CD4-positive, alpha-beta T cell (primary cell): ENCODE measurements at regions of chr22 and their contacts with region 1.

Region 1: DNA sequence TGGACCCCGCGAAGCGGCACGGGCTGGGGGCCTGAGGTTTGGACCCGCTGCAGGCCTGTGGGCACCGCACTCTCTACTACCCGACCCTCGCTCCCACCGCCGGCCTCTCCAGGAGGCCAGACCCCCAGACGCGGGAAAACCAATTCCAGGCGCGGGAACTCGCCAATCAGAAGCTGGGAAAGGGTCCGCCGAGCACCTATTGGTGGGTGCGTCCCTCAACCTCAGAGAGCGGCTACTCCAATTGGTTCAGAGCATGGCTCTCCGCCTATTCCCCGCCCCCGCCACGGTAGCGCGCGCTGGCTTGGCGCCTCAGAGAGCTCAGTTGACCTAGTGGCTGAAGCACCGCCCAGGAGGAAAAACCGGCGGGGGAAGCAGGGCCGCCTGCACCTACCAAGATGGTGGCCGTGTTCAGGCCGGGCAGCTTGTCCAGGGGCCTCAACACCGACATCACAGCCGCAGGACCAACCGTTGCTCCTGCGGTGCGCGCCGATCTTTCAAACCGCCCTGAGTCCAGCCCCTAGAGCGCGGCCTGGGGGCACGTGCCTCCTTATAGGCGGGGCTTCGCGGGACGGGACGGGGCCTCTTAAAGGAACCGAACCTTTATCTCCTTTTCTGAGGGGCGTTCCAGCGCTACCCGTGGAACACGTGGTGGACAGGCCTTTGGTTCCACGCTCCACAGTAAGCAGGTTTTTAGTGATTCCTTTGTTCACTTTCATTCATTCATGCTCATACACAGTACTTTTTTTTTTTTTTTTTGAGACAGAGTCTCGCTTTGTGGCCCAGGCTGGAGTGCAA is at the start of gene CENPM:
- DNase-seq: peak; percentile 71 to 91 (median 82)
- ATAC-seq: peak; percentile 94
- H3K4me3 ChIP-seq: peak within 1 kb of the TSS; percentile 95
- H3K4me3 Mint-ChIP-seq: peak within 1 kb of the TSS; percentile 97
- H3K27ac ChIP-seq: no peak within 1 kb of the TSS
- H3K27ac Mint-ChIP-seq: peak within 1 kb of the TSS; percentile 62
- H3K4me1 ChIP-seq: peaks cover 25% of the 10 kb centered on the region
- H3K4me1 Mint-ChIP-seq: peaks cover 15% of the 10 kb centered on the region
- H3K27me3 ChIP-seq: no peaks in the 10 kb centered on the region
- H3K27me3 Mint-ChIP-seq: no peaks in the 10 kb centered on the region
- CTCF ChIP-seq: no peak
- total RNA-seq, gene CENPM: 7.6 to 8.4 TPM

Region 2: DNA sequence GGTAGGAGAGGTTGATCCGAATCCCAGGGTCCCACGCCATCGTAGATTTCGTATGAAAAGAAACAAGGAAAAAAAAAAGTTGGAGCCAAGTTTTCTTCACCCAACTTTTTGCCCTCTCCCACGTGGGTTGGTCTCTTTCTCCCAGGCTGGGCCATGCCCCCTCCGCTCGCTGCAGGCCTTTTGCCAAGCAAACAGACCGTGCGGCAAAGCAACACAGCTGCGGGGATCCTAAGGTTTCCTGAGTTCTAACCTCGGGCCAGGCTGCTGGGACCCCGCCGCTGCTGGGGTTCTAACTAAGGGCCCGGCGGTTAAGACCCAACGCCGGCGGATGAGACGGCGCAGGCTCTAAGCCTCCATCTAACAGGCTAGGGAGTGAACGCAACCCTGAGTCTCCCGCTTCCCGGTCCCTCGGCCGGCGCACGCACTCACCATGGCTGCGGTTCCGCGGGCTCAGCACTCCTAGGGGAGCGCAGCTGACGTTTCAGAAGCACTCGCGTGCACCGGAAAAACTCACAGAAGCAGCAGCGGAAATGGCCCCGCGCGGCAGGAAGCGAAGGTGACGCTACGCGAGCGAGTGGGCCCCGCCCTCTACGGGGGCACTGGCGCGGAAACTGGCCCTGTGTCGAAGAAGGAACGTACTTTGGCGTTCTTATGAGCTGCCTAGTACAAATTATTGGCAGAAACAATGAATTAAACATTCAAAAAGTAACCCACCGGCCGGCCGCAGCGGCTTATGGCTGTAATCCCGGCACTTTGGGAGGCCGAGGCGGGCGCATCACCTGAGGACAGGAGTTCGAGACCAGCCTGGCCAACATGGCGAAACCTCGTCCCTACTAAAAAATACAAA is 258.2 kb before region 1 on chr22 and contains the start of gene SNU13:
- CTCF ChIA-PET with region 1: no interaction called
- POLR2A ChIA-PET with region 1: interaction called, 14 read pairs
- intact Hi-C with region 1: no loop called
- DNase-seq: peak; percentile 87 to 97 (median 90)
- ATAC-seq: peak; percentile 92
- H3K4me3 ChIP-seq: peak within 1 kb of the TSS; percentile 91
- H3K4me3 Mint-ChIP-seq: peak within 1 kb of the TSS; percentile 96
- H3K27ac ChIP-seq: peak within 1 kb of the TSS; percentile 95 to 98
- H3K27ac Mint-ChIP-seq: peak within 1 kb of the TSS; percentile 99
- H3K4me1 ChIP-seq: peaks cover 39% of the 10 kb centered on the region
- H3K4me1 Mint-ChIP-seq: peaks cover 45% of the 10 kb centered on the region
- H3K27me3 ChIP-seq: no peaks in the 10 kb centered on the region
- H3K27me3 Mint-ChIP-seq: no peaks in the 10 kb centered on the region
- CTCF ChIP-seq: no peak
- total RNA-seq, gene SNU13: 134 to 140 TPM

Region 3: GRCh38 chr22:41822317-41823060 is 124.3 kb before region 1 on chr22:
- CTCF ChIA-PET with region 1: interaction called, 16 read pairs
- POLR2A ChIA-PET with region 1: interaction called, 3 read pairs
- intact Hi-C with region 1: loop called in 1 of 2 experiments (anchors 1 kb)
- DNase-seq: peak in 6 of 14 experiments; percentile 6 to 87 (median 66)
- ATAC-seq: peak; percentile 92
- H3K4me3 ChIP-seq: no peak overlapping the region
- H3K4me3 Mint-ChIP-seq: no peak overlapping the region
- H3K27ac ChIP-seq: no peak overlapping the region
- H3K27ac Mint-ChIP-seq: peak overlapping the region; percentile 69
- H3K4me1 ChIP-seq: peaks cover 5% of the 10 kb centered on the region
- H3K4me1 Mint-ChIP-seq: peaks cover 18% of the 10 kb centered on the region
- H3K27me3 ChIP-seq: no peaks in the 10 kb centered on the region
- H3K27me3 Mint-ChIP-seq: no peaks in the 10 kb centered on the region
- CTCF ChIP-seq: peak; percentile 60

Region 4: DNA sequence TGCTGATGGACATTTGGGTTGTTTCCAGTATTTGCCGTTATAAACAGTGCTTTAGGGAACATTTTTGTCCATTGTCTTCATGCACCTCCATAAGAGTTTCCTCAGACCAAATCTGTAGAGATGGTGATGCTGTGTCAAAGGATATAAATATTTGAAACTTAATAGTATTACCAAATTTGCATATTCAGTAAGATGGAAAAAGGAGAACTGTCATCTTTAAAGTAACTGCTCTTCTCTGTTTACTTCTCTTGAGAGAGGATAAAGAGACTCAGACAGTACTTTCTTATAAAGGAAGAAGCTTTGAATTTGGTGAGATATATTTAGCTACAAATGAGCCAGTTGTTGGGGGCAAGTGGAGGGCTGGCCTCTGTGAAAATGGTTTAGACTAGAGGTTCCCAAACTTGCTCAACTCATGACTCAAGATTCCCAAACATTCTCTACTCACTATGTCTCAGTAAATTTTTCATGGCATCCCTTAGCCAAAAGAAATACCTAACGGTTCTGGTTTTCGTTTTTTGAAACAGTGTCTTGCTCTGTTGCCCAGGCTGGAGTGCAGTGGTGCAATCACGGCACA is 58.1 kb before region 1 on chr22:
- CTCF ChIA-PET with region 1: no interaction called
- POLR2A ChIA-PET with region 1: no interaction called
- intact Hi-C with region 1: no loop called
- DNase-seq: no peak
- ATAC-seq: no peak
- H3K4me3 ChIP-seq: no peak overlapping the region
- H3K4me3 Mint-ChIP-seq: no peak overlapping the region
- H3K27ac ChIP-seq: no peak overlapping the region
- H3K27ac Mint-ChIP-seq: no peak overlapping the region
- H3K4me1 ChIP-seq: no peaks in the 10 kb centered on the region
- H3K4me1 Mint-ChIP-seq: no peaks in the 10 kb centered on the region
- H3K27me3 ChIP-seq: no peaks in the 10 kb centered on the region
- H3K27me3 Mint-ChIP-seq: no peaks in the 10 kb centered on the region
- CTCF ChIP-seq: no peak

Region 5: GRCh38 chr22:41925655-41926460 is 21.0 kb before region 1 on chr22:
- CTCF ChIA-PET with region 1: interaction called, 63 read pairs
- POLR2A ChIA-PET with region 1: no interaction called
- intact Hi-C with region 1: no loop called
- DNase-seq: peak; percentile 59 to 88 (median 76)
- ATAC-seq: peak; percentile 84
- H3K4me3 ChIP-seq: peak overlapping the region; percentile 45
- H3K4me3 Mint-ChIP-seq: peak overlapping the region; percentile 80
- H3K27ac ChIP-seq: no peak overlapping the region
- H3K27ac Mint-ChIP-seq: peak overlapping the region; percentile 55
- H3K4me1 ChIP-seq: peaks cover 30% of the 10 kb centered on the region
- H3K4me1 Mint-ChIP-seq: peaks cover 7% of the 10 kb centered on the region
- H3K27me3 ChIP-seq: peaks cover 0 to 9% of the 10 kb centered on the region in 2 experiments
- H3K27me3 Mint-ChIP-seq: peaks cover 9% of the 10 kb centered on the region
- CTCF ChIP-seq: peak; percentile 75

Region 6: GRCh38 chr22:41998361-41999275 is 51.8 kb after region 1 on chr22 and contains the start of gene WBP2NL:
- CTCF ChIA-PET with region 1: no interaction called
- POLR2A ChIA-PET with region 1: no interaction called
- intact Hi-C with region 1: loop called in 1 of 2 experiments (anchors 2 kb)
- DNase-seq: peak; percentile 77 to 94 (median 88)
- ATAC-seq: peak; percentile 95
- H3K4me3 ChIP-seq: peak within 1 kb of the TSS; percentile 73
- H3K4me3 Mint-ChIP-seq: peak within 1 kb of the TSS; percentile 93
- H3K27ac ChIP-seq: peak within 1 kb of the TSS in 1 of 2 donors; percentile 61
- H3K27ac Mint-ChIP-seq: peak within 1 kb of the TSS; percentile 73
- H3K4me1 ChIP-seq: peaks cover 23% of the 10 kb centered on the region
- H3K4me1 Mint-ChIP-seq: peaks cover 23% of the 10 kb centered on the region
- H3K27me3 ChIP-seq: no peaks in the 10 kb centered on the region
- H3K27me3 Mint-ChIP-seq: no peaks in the 10 kb centered on the region
- CTCF ChIP-seq: no peak
- total RNA-seq, gene WBP2NL: 0.38 to 1.7 TPM

Region 7: GRCh38 chr22:42039271-42039670 is 92.4 kb after region 1 on chr22:
- CTCF ChIA-PET with region 1: no interaction called
- POLR2A ChIA-PET with region 1: no interaction called
- intact Hi-C with region 1: no loop called
- DNase-seq: no peak
- ATAC-seq: no peak
- H3K4me3 ChIP-seq: no peak overlapping the region
- H3K4me3 Mint-ChIP-seq: no peak overlapping the region
- H3K27ac ChIP-seq: no peak overlapping the region
- H3K27ac Mint-ChIP-seq: no peak overlapping the region
- H3K4me1 ChIP-seq: no peaks in the 10 kb centered on the region
- H3K4me1 Mint-ChIP-seq: no peaks in the 10 kb centered on the region
- H3K27me3 ChIP-seq: no peaks in the 10 kb centered on the region
- H3K27me3 Mint-ChIP-seq: no peaks in the 10 kb centered on the region
- CTCF ChIP-seq: no peak